ENCODE measurements at regions of chr2 and their contacts with region 1.

Region 1: DNA sequence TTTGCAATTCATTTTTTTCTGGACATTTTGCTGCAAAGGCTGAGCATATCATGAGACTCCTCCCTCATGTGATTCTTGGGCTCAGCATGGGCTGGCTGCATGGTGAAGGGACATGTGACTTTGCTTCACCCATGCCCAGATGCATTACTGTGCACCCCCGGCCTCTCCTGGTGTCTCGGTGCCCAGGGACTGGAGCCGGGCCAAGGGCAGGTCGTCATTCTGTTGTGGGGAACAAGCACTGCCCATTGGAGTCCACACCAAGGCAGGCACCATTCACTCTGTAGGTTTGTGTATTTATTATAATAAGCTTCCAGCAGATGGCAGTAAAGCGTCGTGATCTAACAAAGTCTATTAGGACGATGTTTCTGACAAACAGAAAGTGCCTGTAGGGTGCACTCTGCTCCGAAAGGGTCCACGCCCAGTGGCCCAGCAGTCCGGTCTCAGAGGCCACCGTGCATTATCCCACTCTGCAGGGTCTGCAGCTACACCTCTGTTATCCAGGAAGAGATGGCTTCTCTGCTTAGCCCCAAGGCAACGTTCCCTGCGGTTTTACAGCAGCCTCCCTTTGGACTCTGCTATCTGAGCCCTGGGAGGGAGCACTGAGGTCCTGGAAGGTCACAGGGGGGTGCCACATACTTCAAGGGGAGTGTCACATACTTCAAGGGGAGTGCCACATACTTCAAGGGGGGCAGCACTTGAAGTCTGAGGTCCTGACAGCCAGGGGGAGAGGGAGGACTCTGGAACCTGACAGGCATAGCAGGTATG is 219.6 kb downstream of the TSN start:
- DNase-seq: peak; percentile 71
- ATAC-seq: peak; percentile 99
- H3K4me3 ChIP-seq: peak overlapping the region; percentile 22
- H3K27ac ChIP-seq: no peak overlapping the region
- H3K4me1 ChIP-seq: no peaks in the 10 kb centered on the region
- H3K27me3 ChIP-seq: no peaks in the 10 kb centered on the region; the same call in 1 of the 2 replicates
- CTCF ChIP-seq: peak; percentile 69
- POLR2A ChIP-seq: no peak
- RAD21 ChIP-seq: peak; percentile 82

Region 2: DNA sequence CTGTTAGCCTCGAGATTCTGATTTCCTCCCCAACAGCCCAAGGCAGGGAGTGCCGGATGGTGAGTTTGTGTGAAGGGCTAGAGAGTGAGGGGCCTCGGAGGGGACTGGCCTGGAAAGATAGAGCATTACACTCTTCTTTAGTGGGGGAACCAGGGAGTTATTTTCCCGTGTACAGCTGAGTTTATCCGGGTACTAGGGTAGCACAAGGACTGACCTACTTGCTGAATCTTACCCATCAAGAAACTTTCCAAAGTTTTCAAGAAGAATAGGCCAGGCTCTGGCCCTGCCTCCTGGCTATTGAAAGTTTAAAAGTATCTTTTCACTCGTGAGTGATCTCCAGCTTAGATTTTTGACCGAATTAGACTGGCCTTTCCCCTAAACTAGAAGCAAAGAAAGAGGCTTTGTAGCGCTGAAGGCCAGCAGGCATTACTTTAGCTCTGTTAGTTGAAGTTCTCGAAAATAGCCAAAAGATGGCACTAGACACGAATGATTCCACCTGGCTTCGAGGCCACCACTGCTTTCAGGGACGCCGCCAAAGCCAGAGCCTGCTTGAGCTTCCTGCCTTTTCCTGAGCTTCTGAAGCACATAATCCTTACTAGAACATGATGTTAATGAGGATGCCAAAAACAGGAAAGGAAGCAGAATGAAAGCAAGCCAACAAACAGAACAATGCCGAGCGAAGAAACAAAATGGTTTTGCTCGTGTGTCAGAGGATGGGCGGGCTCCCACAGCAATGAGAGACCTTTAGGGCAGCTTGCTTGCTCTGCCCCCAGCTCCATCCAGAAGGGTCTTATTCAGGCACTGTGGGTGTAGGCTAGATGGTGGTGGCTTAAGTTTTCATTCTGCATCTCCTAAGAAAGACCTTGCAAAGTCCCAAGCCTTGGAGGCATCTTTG is 163.9 kb before region 1 on chr2:
- CTCF ChIA-PET with region 1: interaction called, 3 read pairs
- POLR2A ChIA-PET with region 1: no interaction called
- dilution Hi-C with region 1: no loop called
- in situ Hi-C with region 1: no loop called
- intact Hi-C with region 1: loop called (anchors 2 kb)
- DNase-seq: peak; percentile 63
- ATAC-seq: peak; percentile 99
- H3K4me3 ChIP-seq: no peak overlapping the region
- H3K27ac ChIP-seq: no peak overlapping the region
- H3K4me1 ChIP-seq: no peaks in the 10 kb centered on the region
- H3K27me3 ChIP-seq: peaks cover 7% of the 10 kb centered on the region
- CTCF ChIP-seq: peak; percentile 64
- POLR2A ChIP-seq: no peak
- RAD21 ChIP-seq: peak; percentile 80

Region 3: DNA sequence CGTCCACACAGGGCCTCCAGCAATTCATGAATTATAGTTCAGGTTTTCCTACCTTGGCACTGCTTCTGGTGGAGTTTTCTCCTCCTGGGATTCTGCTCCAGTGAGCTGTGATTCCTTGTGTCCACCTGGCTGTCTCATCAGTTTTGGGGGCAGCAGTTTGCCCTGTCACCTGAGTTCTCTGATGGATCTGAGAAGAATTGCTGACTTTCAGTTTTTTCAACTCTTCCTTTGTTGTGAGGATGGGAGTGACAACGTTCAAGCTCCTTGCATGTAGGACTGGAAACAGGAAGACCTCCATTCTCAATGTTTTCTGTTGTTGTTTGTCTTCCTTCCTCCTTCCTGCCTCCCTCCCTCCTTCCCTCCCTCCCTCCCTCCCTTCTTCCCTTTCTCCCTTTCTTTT is 139.3 kb after region 1 on chr2:
- CTCF ChIA-PET with region 1: no interaction called
- POLR2A ChIA-PET with region 1: no interaction called
- dilution Hi-C with region 1: no loop called
- in situ Hi-C with region 1: no loop called
- intact Hi-C with region 1: no loop called
- DNase-seq: no peak
- ATAC-seq: no peak
- H3K4me3 ChIP-seq: no peak overlapping the region
- H3K27ac ChIP-seq: no peak overlapping the region
- H3K4me1 ChIP-seq: no peaks in the 10 kb centered on the region
- H3K27me3 ChIP-seq: no peaks in the 10 kb centered on the region
- CTCF ChIP-seq: no peak
- POLR2A ChIP-seq: no peak
- RAD21 ChIP-seq: no peak

Region 4: GRCh38 chr2:122136056-122136455 is 161.0 kb after region 1 on chr2:
- CTCF ChIA-PET with region 1: no interaction called
- POLR2A ChIA-PET with region 1: no interaction called
- dilution Hi-C with region 1: no loop called
- in situ Hi-C with region 1: no loop called
- intact Hi-C with region 1: loop called (anchors 1 kb)
- DNase-seq: peak; percentile 21
- ATAC-seq: no peak
- H3K4me3 ChIP-seq: no peak overlapping the region
- H3K27ac ChIP-seq: no peak overlapping the region
- H3K4me1 ChIP-seq: no peaks in the 10 kb centered on the region
- H3K27me3 ChIP-seq: no peaks in the 10 kb centered on the region
- CTCF ChIP-seq: peak; percentile 36
- POLR2A ChIP-seq: no peak
- RAD21 ChIP-seq: peak; percentile 35

Region 5: GRCh38 chr2:122451040-122451439 is 476.0 kb after region 1 on chr2:
- CTCF ChIA-PET with region 1: no interaction called
- POLR2A ChIA-PET with region 1: no interaction called
- dilution Hi-C with region 1: no loop called
- in situ Hi-C with region 1: loop called (anchors 10 kb)
- intact Hi-C with region 1: no loop called
- DNase-seq: peak; percentile 21
- ATAC-seq: no peak
- H3K4me3 ChIP-seq: no peak overlapping the region
- H3K27ac ChIP-seq: no peak overlapping the region
- H3K4me1 ChIP-seq: no peaks in the 10 kb centered on the region
- H3K27me3 ChIP-seq: no peaks in the 10 kb centered on the region
- CTCF ChIP-seq: peak; percentile 62
- POLR2A ChIP-seq: no peak
- RAD21 ChIP-seq: peak; percentile 66